GM12878 (cell line): ENCODE measurements at regions of chr7 and their contacts with region 1.

Region 1: DNA sequence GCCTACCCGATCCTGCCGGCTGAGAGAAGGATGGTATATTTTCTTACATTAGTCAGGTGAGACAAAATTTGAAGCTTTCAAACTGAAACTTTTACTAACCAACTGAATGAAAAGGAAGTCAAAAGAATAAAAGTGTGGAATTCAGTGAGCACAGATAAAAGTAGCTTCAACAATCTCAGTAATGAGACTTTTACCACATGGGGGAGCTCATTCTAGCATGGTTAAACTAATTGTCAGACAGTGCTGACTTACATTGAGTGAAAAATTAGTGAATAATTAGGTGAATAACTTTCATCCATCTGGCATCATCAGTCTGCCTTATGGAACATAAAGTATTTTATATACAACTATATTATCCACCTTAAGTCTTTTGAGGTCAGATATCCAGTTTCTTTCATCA is 8.4 kb downstream of the FAM237B start:
- DNase-seq: no peak
- ATAC-seq: peak; percentile 73
- H3K4me3 ChIP-seq: no peak overlapping the region
- H3K27ac ChIP-seq: no peak overlapping the region
- H3K4me1 ChIP-seq: no peaks in the 10 kb centered on the region
- H3K27me3 ChIP-seq: no peaks in the 10 kb centered on the region
- CTCF ChIP-seq: peak; percentile 23 to 42 (median 32); a peak in 3 of 6 replicates
- EP300 ChIP-seq: no peak
- POLR2A ChIP-seq: no peak
- RAD21 ChIP-seq: peak; percentile 42

Region 2: GRCh38 chr7:90276033-90276728 is 36.6 kb before region 1 on chr7:
- CTCF ChIA-PET with region 1: interaction called, 9 read pairs
- POLR2A ChIA-PET with region 1: no interaction called
- RAD21 ChIA-PET with region 1: no interaction called
- SMC1A ChIA-PET with region 1: interaction called, 11 read pairs
- in situ Hi-C with region 1: no loop called
- intact Hi-C with region 1: no loop called
- DNase-seq: no peak
- ATAC-seq: no peak
- H3K4me3 ChIP-seq: no peak overlapping the region
- H3K27ac ChIP-seq: no peak overlapping the region
- H3K4me1 ChIP-seq: no peaks in the 10 kb centered on the region
- H3K27me3 ChIP-seq: no peaks in the 10 kb centered on the region
- CTCF ChIP-seq: no peak
- EP300 ChIP-seq: no peak
- POLR2A ChIP-seq: no peak
- RAD21 ChIP-seq: no peak

Region 3: GRCh38 chr7:90298145-90299038 is 14.4 kb before region 1 on chr7:
- CTCF ChIA-PET with region 1: interaction called, 18 read pairs
- POLR2A ChIA-PET with region 1: no interaction called
- RAD21 ChIA-PET with region 1: no interaction called
- SMC1A ChIA-PET with region 1: interaction called, 9 read pairs
- in situ Hi-C with region 1: no loop called
- intact Hi-C with region 1: no loop called
- DNase-seq: no peak
- ATAC-seq: peak; percentile 98
- H3K4me3 ChIP-seq: no peak overlapping the region
- H3K27ac ChIP-seq: no peak overlapping the region
- H3K4me1 ChIP-seq: no peaks in the 10 kb centered on the region
- H3K27me3 ChIP-seq: no peaks in the 10 kb centered on the region; a peak in 1 of 4 replicates
- CTCF ChIP-seq: peak; percentile 58 to 72 (median 67)
- EP300 ChIP-seq: no peak
- POLR2A ChIP-seq: no peak
- RAD21 ChIP-seq: peak; percentile 56

Region 4: GRCh38 chr7:90412458-90413184 is 99.9 kb after region 1 on chr7:
- CTCF ChIA-PET with region 1: interaction called, 18 read pairs
- POLR2A ChIA-PET with region 1: no interaction called
- RAD21 ChIA-PET with region 1: interaction called, 5 read pairs
- SMC1A ChIA-PET with region 1: interaction called, 13 read pairs
- in situ Hi-C with region 1: no loop called
- intact Hi-C with region 1: loop called (anchors 1 kb)
- DNase-seq: no peak
- ATAC-seq: peak; percentile 90
- H3K4me3 ChIP-seq: no peak overlapping the region
- H3K27ac ChIP-seq: no peak overlapping the region
- H3K4me1 ChIP-seq: no peaks in the 10 kb centered on the region
- H3K27me3 ChIP-seq: no peaks in the 10 kb centered on the region
- CTCF ChIP-seq: peak; percentile 39 to 58 (median 53); a peak in 5 of 6 replicates
- EP300 ChIP-seq: no peak
- POLR2A ChIP-seq: no peak
- RAD21 ChIP-seq: peak; percentile 44; the same call in 1 of the 2 replicates

Region 5: GRCh38 chr7:90461219-90461618 is 148.5 kb after region 1 on chr7:
- CTCF ChIA-PET with region 1: no interaction called
- POLR2A ChIA-PET with region 1: no interaction called
- RAD21 ChIA-PET with region 1: no interaction called
- SMC1A ChIA-PET with region 1: no interaction called
- in situ Hi-C with region 1: no loop called
- intact Hi-C with region 1: no loop called
- DNase-seq: no peak
- ATAC-seq: no peak
- H3K4me3 ChIP-seq: no peak overlapping the region
- H3K27ac ChIP-seq: no peak overlapping the region
- H3K4me1 ChIP-seq: no peaks in the 10 kb centered on the region
- H3K27me3 ChIP-seq: no peaks in the 10 kb centered on the region
- CTCF ChIP-seq: no peak
- EP300 ChIP-seq: no peak
- POLR2A ChIP-seq: no peak
- RAD21 ChIP-seq: no peak